ENCODE measurements at regions of chr15 and their contacts with region 1.

Region 1: DNA sequence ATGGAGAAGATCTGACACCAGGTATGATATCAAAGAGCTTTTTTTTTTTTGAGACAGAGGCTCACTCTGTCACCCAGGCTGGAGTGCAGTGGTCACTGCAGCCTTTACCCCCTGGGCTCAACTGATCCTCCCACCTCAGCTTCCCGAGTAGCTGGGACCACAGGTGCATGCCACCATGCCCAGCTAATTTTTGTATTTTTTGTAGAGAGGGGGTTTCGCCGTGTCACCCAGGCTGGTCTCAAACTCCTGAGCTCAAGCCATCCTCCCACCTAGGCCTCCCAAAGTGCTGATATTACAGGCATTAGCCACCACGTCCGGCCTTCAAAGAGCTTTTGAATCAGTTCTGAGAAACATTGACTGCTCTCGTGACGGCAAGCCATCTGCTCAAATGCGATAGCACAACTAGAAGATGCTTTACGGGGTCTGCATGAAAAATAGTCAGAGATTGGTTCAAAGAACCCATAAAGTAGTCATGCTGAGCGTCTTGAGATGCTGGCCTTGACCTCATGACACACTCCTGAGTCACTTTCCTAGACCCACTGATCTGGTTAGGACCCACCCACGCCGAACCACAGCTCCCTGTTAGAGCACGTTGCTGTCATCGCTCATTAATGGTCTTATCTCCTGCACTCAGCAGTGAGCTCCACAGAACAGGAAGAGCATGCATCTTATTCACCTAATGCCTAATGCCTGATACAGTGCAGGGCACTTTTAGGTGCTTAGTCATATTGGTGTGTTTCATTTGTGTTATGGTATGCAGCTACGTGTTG is 57.0 kb upstream of the NR2F2 start:
- DNase-seq: peak; percentile 88
- ATAC-seq: peak; percentile 96
- H3K4me3 ChIP-seq: no peak overlapping the region
- H3K27ac ChIP-seq: peak overlapping the region; percentile 40
- H3K4me1 ChIP-seq: peaks cover 18% of the 10 kb centered on the region
- H3K27me3 ChIP-seq: no peaks in the 10 kb centered on the region
- CTCF ChIP-seq: no peak

Region 2: DNA sequence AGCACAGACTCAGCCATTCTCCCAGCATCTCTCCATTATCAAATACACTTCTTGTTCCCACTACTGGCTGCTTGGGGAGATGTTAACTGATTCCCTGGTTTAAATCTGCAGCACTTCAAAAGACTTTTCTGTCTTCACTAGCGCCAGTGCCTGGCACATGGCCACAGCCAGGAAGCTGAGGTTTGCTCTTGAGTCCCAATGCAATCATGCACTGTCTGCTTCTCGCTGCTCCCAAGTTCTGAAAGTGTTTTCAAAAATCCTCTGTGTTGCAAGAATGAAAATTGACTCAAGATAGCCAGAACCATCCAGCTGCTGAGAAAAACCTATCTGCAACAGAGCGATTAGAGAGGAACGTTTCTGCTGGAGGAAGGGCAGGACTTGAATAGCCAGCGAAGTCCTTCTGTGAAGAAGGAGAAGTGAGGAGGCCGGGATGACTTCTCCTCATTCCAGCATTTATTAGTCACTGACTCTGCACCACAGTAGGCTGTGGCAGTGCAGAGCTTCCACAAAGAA is 301.4 kb before region 1 on chr15:
- CTCF ChIA-PET with region 1: no interaction called
- POLR2A ChIA-PET with region 1: no interaction called
- in situ Hi-C with region 1: no loop called
- intact Hi-C with region 1: no loop called
- DNase-seq: no peak
- ATAC-seq: no peak
- H3K4me3 ChIP-seq: no peak overlapping the region
- H3K27ac ChIP-seq: no peak overlapping the region
- H3K4me1 ChIP-seq: no peaks in the 10 kb centered on the region
- H3K27me3 ChIP-seq: no peaks in the 10 kb centered on the region
- CTCF ChIP-seq: no peak

Region 3: DNA sequence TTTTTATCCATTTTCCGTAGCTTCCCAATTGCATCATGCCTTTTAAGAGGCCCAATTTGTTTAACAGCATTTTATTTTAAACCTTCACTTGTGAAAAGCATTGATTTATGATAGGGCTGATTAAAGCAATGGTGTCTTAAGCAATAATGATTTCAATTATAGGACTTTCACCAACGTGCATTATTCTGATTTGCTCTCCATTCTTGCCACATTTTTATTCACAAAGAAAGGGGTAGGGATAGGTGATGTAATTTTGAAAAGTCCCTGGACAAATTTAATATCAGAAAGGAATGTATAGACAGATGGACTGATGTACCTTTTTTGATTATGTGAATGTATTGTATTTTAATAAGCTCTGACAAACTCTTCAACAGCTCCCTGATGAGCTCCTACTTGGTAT is 19.1 kb after region 1 on chr15:
- CTCF ChIA-PET with region 1: interaction called, 13 read pairs
- POLR2A ChIA-PET with region 1: no interaction called
- in situ Hi-C with region 1: no loop called
- intact Hi-C with region 1: no loop called
- DNase-seq: no peak
- ATAC-seq: no peak
- H3K4me3 ChIP-seq: no peak overlapping the region
- H3K27ac ChIP-seq: no peak overlapping the region
- H3K4me1 ChIP-seq: no peaks in the 10 kb centered on the region
- H3K27me3 ChIP-seq: no peaks in the 10 kb centered on the region
- CTCF ChIP-seq: no peak